ENCODE measurements at regions of chr3 and their contacts with region 1.

Region 1: GRCh38 chr3:62558549-62559112 is 185.3 kb upstream of the FEZF2 start:
- DNase-seq: peak; percentile 29
- H3K4me3 ChIP-seq: no peak overlapping the region
- H3K27ac ChIP-seq: no peak overlapping the region
- H3K4me1 ChIP-seq: peaks cover 22% of the 10 kb centered on the region
- H3K27me3 ChIP-seq: no peaks in the 10 kb centered on the region
- CTCF ChIP-seq: peak; percentile 50 to 58
- POLR2A ChIP-seq: no peak

Region 2: GRCh38 chr3:62318750-62319569 is 239.7 kb before region 1 on chr3:
- CTCF ChIA-PET with region 1: no interaction called
- POLR2A ChIA-PET with region 1: no interaction called
- dilution Hi-C with region 1: no loop called
- intact Hi-C with region 1: loop called (anchors 5 kb)
- DNase-seq: peak; percentile 81
- H3K4me3 ChIP-seq: peak overlapping the region; percentile 71 to 85 (median 81)
- H3K27ac ChIP-seq: peak overlapping the region; percentile 39
- H3K4me1 ChIP-seq: peaks cover 9% of the 10 kb centered on the region
- H3K27me3 ChIP-seq: no peaks in the 10 kb centered on the region
- CTCF ChIP-seq: no peak
- POLR2A ChIP-seq: no peak

Region 3: GRCh38 chr3:62493109-62493801 is 65.4 kb before region 1 on chr3:
- CTCF ChIA-PET with region 1: interaction called, 12 read pairs
- POLR2A ChIA-PET with region 1: no interaction called
- dilution Hi-C with region 1: no loop called
- intact Hi-C with region 1: loop called (anchors 1 kb)
- DNase-seq: no peak
- H3K4me3 ChIP-seq: no peak overlapping the region
- H3K27ac ChIP-seq: no peak overlapping the region
- H3K4me1 ChIP-seq: no peaks in the 10 kb centered on the region
- H3K27me3 ChIP-seq: no peaks in the 10 kb centered on the region
- CTCF ChIP-seq: peak in 1 of 2 donors; percentile 26
- POLR2A ChIP-seq: no peak

Region 4: GRCh38 chr3:62601238-62601931 is 42.8 kb after region 1 on chr3:
- CTCF ChIA-PET with region 1: interaction called, 17 read pairs
- POLR2A ChIA-PET with region 1: interaction called, 8 read pairs
- dilution Hi-C with region 1: no loop called
- intact Hi-C with region 1: loop called (anchors 1 kb)
- DNase-seq: peak; percentile 88
- H3K4me3 ChIP-seq: no peak overlapping the region
- H3K27ac ChIP-seq: peak overlapping the region; percentile 98
- H3K4me1 ChIP-seq: peaks cover 57% of the 10 kb centered on the region
- H3K27me3 ChIP-seq: no peaks in the 10 kb centered on the region
- CTCF ChIP-seq: no peak
- POLR2A ChIP-seq: peak; percentile 31

Region 5: GRCh38 chr3:62622553-62623193 is 64.0 kb after region 1 on chr3:
- CTCF ChIA-PET with region 1: interaction called, 23 read pairs
- POLR2A ChIA-PET with region 1: no interaction called
- dilution Hi-C with region 1: no loop called
- intact Hi-C with region 1: loop called (anchors 1 kb)
- DNase-seq: peak; percentile 76
- H3K4me3 ChIP-seq: no peak overlapping the region
- H3K27ac ChIP-seq: no peak overlapping the region
- H3K4me1 ChIP-seq: no peaks in the 10 kb centered on the region
- H3K27me3 ChIP-seq: peaks cover 0 to 5% of the 10 kb centered on the region in 2 experiments
- CTCF ChIP-seq: peak; percentile 56 to 58
- POLR2A ChIP-seq: no peak